WTC11 (cell line): ENCODE measurements at regions of chr19 and their contacts with region 1.

Region 1: DNA sequence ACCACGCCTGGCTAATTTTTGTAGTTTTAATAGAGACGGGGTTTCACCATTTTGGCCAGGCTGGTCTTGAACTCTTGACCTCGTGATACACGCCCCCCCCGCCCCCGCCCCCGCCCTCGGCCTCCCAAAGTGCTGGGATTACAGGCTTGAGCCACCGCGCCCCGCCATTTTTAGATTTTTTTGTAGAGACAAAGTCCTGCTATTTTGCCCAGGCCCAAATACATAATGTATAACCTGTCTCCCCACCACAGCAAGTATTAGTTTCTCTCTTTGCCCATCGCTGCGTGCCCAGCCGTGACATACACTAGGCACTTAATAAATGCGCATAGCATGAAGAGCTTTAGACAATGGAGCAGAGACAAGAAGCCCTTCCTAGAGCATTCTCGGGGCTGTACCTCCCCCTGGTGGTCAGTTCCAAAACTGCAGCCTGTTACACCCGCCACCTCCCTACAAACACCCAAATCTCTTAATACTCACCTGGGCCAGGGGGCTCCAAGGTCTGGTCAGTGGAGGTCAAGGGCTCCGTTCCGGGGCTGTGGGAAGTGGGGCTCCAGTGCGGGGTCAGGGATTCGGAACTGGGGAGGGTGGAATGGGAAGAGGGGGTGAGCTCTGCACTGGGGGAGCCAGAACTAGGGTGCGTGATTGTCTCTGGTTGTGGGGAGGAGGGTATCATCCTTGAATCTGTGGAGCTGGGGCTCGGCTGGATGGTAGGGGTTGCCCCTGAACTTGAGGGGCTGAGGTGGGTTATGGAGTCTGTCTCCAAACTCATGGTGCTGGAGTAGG is 22.5 kb downstream of the IQCN start:
- DNase-seq: peak; percentile 93
- ATAC-seq: peak; percentile 83
- H3K4me3 Mint-ChIP-seq: no peak overlapping the region
- H3K27ac Mint-ChIP-seq: peak overlapping the region; percentile 35; the same call in 1 of the 2 replicates
- H3K4me1 Mint-ChIP-seq: peaks cover 22% of the 10 kb centered on the region
- H3K27me3 Mint-ChIP-seq: peaks cover 13% of the 10 kb centered on the region
- CTCF ChIP-seq: peak; percentile 99

Region 2: DNA sequence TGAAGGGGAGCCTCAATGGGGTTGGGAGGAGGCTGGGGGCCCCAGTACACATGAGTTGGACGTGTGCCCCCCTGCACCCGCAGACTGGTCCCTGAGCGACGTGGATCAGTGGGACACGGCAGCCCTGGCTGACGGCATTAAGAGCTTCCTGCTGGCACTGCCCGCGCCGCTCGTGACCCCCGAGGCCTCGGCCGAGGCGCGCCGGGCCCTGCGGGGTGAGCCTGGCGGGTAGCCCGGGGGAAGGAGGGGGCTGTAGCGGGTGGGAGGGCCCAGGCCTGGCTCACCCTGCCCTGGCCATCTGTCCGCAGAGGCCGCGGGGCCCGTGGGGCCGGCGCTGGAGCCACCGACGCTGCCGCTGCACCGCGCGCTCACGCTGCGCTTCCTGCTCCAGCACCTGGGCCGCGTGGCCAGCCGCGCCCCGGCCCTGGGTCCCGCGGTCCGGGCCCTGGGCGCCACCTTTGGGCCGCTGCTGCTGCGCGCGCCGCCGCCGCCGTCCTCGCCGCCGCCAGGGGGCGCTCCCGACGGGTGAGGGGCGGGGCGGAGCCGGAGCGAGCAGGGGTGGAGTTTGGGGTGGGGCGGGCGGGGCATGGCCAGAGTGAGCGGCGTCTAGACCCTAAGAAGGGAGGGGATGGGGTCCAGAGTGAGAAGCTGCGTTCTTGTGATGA is 90.7 kb before region 1 on chr19:
- CTCF ChIA-PET with region 1: interaction called, 21 read pairs
- POLR2A ChIA-PET with region 1: no interaction called
- DNase-seq: peak; percentile 77
- ATAC-seq: peak; percentile 84
- H3K4me3 Mint-ChIP-seq: peak overlapping the region; percentile 42
- H3K27ac Mint-ChIP-seq: no peak overlapping the region
- H3K4me1 Mint-ChIP-seq: peaks cover 15% of the 10 kb centered on the region
- H3K27me3 Mint-ChIP-seq: no peaks in the 10 kb centered on the region
- CTCF ChIP-seq: peak; percentile 64; the same call in 1 of the 2 replicates

Region 3: DNA sequence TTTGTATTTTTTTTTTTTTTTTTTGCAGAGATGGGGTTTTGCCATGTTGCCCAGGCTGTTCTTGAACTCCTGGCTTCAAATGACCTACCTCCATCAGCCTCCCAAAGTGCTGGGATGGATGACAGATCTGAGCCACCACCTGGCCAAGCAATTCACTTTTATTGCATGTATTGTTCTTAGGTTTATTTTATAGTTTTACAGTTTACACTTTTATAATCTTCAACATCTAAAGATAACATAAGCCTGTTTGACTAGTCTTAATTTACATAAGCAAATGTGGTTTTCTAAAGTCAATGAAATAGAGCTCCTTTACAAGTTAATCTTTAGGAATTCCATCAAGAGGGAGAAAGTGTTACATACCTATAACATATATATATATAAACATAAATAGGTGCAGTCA is 68.2 kb before region 1 on chr19:
- CTCF ChIA-PET with region 1: interaction called, 23 read pairs
- POLR2A ChIA-PET with region 1: no interaction called
- DNase-seq: no peak
- ATAC-seq: no peak
- H3K4me3 Mint-ChIP-seq: no peak overlapping the region
- H3K27ac Mint-ChIP-seq: no peak overlapping the region
- H3K4me1 Mint-ChIP-seq: peaks cover 5% of the 10 kb centered on the region
- H3K27me3 Mint-ChIP-seq: no peaks in the 10 kb centered on the region
- CTCF ChIP-seq: no peak

Region 4: DNA sequence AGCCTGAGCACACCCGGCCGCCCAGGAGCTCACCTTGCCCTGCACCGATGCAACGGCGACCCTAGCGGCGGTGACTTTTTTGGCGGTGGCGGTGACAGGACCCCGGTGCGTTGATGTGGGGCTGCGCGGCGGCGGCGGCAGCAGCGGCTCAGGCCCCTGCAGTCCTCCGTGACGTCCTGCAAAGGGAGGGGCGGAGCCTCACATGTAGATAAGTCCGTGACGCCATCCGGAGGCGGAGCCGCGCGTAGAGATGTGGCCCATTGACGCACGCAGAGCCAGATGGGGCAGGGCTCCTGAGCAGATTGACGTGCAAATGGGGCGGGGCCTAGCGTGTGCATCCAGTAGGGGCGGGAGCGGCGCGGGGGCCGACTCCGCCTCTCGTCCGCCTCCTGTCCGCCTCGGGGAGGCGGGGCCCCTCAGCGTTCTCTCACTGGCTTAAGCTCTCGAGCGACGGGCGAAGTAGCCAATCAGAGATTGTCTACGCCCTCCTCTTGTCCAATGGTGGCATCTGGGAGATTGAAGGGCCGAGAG is 47.9 kb before region 1 on chr19 and contains the start of gene RAB3A:
- CTCF ChIA-PET with region 1: interaction called, 369 read pairs
- POLR2A ChIA-PET with region 1: interaction called, 10 read pairs
- DNase-seq: peak; percentile 100
- ATAC-seq: peak; percentile 91
- H3K4me3 Mint-ChIP-seq: peak within 1 kb of the TSS; percentile 95
- H3K27ac Mint-ChIP-seq: peak within 1 kb of the TSS; percentile 99
- H3K4me1 Mint-ChIP-seq: peaks cover 22% of the 10 kb centered on the region
- H3K27me3 Mint-ChIP-seq: no peaks in the 10 kb centered on the region
- CTCF ChIP-seq: no peak
- total RNA-seq, gene RAB3A: 12.2 to 14.7 TPM (median 14.6 TPM) in 3 replicates

Region 5: DNA sequence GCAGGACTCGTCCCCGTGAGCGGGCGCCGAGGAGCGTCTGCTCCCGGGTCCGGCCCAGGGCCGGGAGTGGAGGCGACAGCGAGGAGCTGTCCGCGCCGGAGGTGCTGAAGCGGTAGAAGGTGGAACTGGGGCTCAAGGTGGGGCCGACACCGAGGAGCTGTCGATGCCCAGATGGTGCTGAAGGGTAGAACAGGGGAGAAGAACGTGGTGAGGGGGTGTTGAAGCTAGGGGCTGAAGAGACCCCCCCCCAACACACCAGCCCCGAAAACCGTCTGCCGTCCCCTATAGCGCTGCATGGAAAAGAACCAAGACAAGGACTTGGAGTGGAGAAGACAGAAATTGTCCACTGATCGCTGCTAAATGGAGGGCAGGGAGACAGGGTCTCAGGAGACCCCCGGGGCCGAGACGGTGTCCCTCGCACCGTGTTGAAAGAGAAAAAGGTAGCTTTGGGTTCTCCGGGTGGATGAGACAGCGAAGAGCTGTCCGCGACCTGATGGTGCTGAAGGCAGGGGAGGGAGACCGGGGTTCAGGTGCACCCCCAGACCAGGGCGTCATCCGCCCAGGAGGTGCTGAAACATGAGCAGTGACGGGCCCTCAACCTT is 18.5 kb before region 1 on chr19:
- CTCF ChIA-PET with region 1: interaction called, 100 read pairs
- POLR2A ChIA-PET with region 1: interaction called, 5 read pairs
- DNase-seq: peak; percentile 93
- ATAC-seq: peak; percentile 79
- H3K4me3 Mint-ChIP-seq: peak overlapping the region; percentile 78
- H3K27ac Mint-ChIP-seq: no peak overlapping the region
- H3K4me1 Mint-ChIP-seq: peaks cover 31% of the 10 kb centered on the region
- H3K27me3 Mint-ChIP-seq: peaks cover 12% of the 10 kb centered on the region
- CTCF ChIP-seq: no peak

Region 6: DNA sequence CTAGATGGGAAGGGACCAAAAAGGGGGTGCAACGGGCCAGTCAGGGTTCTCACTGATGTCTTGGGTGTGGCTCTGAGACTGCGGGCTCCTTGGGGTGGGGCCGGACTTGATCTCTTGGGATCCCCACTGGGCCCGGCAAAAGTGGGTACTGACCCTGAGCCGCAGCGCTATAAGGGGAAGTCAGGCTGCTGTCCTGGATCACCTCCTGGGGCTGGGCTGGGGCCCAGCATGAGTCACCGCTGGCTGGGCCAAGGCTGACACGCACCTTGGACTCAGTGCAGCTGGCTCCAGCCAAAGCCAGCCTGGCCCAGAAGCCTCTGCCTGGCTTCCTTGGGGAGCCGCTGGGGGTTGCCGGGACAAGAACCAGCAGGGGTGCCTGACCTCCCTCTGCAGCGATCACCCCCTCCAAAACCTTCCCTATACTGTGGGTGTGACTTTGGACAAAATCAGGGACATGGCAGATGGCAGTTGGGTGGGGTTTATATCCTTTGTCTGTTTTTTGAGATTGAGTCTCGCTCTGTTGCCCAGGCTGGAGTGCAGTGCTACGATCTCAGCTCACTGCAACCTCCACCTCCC is 23.1 kb after region 1 on chr19:
- CTCF ChIA-PET with region 1: interaction called, 41 read pairs
- POLR2A ChIA-PET with region 1: interaction called, 27 read pairs
- DNase-seq: no peak
- ATAC-seq: no peak
- H3K4me3 Mint-ChIP-seq: no peak overlapping the region
- H3K27ac Mint-ChIP-seq: peak overlapping the region; percentile 53; the same call in 1 of the 2 replicates
- H3K4me1 Mint-ChIP-seq: peaks cover 19% of the 10 kb centered on the region
- H3K27me3 Mint-ChIP-seq: peaks cover 11% of the 10 kb centered on the region
- CTCF ChIP-seq: no peak